ENCODE measurements at regions of chr6 and their contacts with region 1.

Region 1: GRCh38 chr6:130836055-130836640 is 8.9 kb downstream of the SMLR1 start:
- DNase-seq: no peak
- H3K4me3 ChIP-seq: no peak overlapping the region
- H3K27ac ChIP-seq: no peak overlapping the region
- H3K4me1 ChIP-seq: no peaks in the 10 kb centered on the region
- H3K27me3 ChIP-seq: no peaks in the 10 kb centered on the region
- CTCF ChIP-seq: no peak

Region 2: DNA sequence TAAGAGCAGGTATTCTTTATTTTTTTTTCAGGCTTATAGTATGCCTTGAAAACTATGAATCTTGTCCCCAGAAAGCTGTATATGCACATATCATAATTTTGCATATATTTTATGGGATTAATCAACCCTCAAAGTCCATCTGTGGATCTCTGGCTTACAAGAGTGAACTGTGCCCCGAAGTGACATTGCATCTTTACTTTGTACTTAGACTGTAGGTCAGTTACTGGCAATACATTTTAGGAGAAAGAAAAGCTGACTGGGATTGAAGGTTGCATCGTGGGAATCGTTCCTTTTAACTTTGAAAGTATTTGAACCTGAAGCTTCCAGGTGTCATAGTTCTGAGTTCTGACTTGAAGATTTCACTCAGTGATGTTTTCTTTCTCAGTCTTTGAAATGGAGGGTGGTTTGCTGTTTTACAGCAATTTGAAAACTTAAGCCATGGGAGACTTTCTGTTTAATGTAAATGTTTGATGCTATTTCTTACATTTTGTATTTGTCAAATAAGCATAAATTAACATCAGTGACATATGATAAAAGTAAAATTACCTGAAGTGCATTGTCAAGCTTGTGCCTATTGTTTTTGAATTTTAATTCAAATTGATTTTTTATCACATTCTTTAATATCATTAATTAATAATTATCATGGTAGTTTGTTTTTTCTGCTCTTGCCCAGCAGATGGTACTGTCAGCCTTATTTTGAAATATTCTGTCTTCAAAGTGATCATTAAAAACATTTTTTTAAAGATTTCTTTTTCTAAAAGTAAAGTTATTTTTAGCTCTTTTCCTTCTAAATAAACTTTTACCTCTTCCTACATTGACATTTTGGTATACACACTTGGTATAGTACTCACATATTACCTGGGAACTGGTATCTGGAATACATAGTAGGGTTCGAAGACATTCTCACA is 788.8 kb before region 1 on chr6:
- intact Hi-C with region 1: no loop called
- DNase-seq: no peak
- H3K4me3 ChIP-seq: no peak overlapping the region
- H3K27ac ChIP-seq: no peak overlapping the region
- H3K4me1 ChIP-seq: no peaks in the 10 kb centered on the region
- H3K27me3 ChIP-seq: no peaks in the 10 kb centered on the region
- CTCF ChIP-seq: no peak

Region 3: DNA sequence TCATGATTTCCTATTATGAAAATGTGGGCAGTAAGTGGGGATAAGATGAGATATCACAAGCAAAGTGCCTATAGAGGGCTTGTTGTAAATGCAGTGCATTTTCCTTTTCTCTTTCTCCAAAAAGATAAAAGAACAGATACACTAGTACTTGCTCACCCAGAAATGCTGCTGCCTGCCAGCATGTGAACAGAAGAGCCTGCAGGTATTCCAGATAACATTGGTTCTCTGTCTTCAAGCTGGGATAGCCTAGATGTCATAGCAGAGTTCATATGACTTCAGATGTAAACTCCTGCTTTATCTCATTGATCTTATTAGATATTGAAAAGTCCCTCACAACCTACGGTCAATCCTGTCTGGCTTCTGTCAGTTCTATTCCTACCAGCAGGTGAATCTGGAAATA is 346.6 kb before region 1 on chr6:
- intact Hi-C with region 1: no loop called
- DNase-seq: no peak
- H3K4me3 ChIP-seq: no peak overlapping the region
- H3K27ac ChIP-seq: no peak overlapping the region
- H3K4me1 ChIP-seq: no peaks in the 10 kb centered on the region
- H3K27me3 ChIP-seq: no peaks in the 10 kb centered on the region
- CTCF ChIP-seq: no peak

Region 4: DNA sequence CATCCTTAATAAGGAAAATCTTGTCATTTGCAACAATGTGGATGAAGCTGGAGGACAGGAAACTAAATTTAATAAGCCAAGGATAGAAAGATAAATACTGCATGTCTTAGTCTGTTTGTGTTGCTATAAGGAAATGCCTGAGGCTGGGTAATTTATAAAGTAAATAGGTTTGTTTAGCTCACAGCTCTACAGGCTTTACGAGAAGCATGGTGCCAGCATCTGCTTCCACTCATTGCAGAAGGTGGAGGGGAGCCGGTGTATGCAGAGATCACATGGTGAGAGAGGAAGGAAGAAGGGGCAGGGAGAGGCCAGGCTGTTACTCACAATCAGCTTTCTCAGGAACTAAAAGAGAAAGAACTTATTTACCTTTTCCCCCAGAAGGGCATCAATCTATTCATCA is 127.8 kb before region 1 on chr6:
- intact Hi-C with region 1: loop called (anchors 10 kb)
- DNase-seq: no peak
- H3K4me3 ChIP-seq: no peak overlapping the region
- H3K27ac ChIP-seq: no peak overlapping the region
- H3K4me1 ChIP-seq: no peaks in the 10 kb centered on the region
- H3K27me3 ChIP-seq: no peaks in the 10 kb centered on the region
- CTCF ChIP-seq: no peak

Region 5: GRCh38 chr6:130981409-130981808 is 145.3 kb after region 1 on chr6:
- intact Hi-C with region 1: no loop called
- DNase-seq: no peak
- H3K4me3 ChIP-seq: no peak overlapping the region
- H3K27ac ChIP-seq: no peak overlapping the region
- H3K4me1 ChIP-seq: no peaks in the 10 kb centered on the region
- H3K27me3 ChIP-seq: no peaks in the 10 kb centered on the region
- CTCF ChIP-seq: no peak